ENCODE measurements at regions of chrX and their contacts with region 1.

Region 1: DNA sequence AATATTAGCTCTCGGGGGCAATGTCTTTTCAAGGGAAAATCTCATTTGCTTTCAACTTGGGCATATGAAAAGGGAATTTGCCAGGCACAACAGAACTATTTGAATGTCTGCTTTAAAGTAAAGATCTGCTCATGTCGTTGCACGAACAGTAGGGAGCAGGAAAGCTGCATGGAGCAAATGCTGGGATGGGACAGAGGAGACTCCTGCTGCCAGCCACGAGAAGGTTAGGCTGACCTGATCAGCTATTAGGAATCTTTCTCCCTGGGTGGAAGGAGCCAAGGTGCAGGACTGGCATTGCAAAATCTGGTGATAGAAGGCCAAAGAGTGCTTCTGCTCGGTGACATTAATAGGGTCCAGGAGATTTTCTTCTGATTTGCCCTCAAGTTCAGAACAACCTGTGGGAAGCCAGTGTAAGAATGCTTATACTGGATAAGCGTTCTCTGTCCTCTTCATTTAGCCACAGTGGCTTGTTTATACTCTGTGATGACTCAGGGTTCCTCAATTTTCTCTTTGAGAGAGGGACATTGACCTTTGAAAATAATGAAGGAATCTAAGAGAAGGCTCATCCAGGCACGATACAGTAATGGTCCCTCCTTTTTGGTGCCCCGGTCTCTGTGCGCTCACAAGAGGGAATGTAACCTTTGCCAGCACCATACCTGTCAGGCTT is 22.9 kb downstream of the FHL1 start:
- DNase-seq: peak; percentile 24
- H3K4me3 ChIP-seq: peak overlapping the region; percentile 51
- H3K27ac ChIP-seq: peak overlapping the region; percentile 87
- H3K4me1 ChIP-seq: peaks cover 87% of the 10 kb centered on the region
- H3K27me3 ChIP-seq: no peaks in the 10 kb centered on the region
- CTCF ChIP-seq: peak; percentile 58

Region 2: DNA sequence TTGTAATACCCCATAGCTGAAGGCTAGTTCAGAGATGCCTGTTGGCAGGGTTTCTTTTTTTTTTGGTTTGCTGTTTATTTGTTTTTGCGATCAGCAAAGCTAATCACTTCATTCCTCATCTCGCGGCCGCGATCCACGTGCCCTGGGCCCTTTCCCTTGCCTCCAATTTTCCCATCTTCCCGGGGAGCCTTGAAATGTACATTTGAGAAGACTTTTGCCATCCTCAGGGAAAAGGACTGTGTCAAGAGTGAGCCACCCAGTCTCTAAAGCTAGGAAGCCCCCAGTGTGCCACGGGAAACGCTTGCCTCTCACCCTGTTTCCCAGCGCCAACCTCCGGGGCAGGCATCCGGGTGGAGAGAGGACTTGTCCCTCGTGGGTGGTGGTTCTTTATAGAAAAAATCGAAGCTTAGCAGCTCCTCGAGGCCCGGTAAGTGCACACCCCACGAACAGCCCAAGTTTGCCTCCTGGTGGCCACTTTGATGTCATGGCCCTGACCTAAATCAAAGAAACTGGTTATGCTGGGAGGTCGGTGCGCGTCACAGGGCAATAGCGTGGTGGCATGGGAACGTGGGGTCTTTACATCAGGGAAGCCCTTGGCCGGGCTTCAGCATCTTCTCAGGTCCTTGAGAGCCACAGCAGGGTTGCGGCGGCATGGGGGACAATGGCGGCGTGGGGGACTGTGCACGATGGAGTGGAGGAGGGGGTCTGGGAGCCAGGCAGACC is 38.9 kb after region 1 on chrX:
- intact Hi-C with region 1: loop called (anchors 5 kb)
- DNase-seq: peak; percentile 38
- H3K4me3 ChIP-seq: no peak overlapping the region
- H3K27ac ChIP-seq: peak overlapping the region; percentile 87
- H3K4me1 ChIP-seq: peaks cover 70% of the 10 kb centered on the region
- H3K27me3 ChIP-seq: no peaks in the 10 kb centered on the region
- CTCF ChIP-seq: peak; percentile 66

Measured in left ventricle myocardium inferior (tissue), 1 donor.